ENCODE measurements at regions of chr18 and their contacts with region 1.

Region 1: GRCh38 chr18:12657684-12658425 is at the start of gene SPIRE1:
- DNase-seq: no peak
- H3K4me3 ChIP-seq: peak within 1 kb of the TSS; percentile 87 to 97 (median 90)
- H3K27ac ChIP-seq: peak within 1 kb of the TSS; percentile 97 to 100 (median 100)
- H3K4me1 ChIP-seq: peaks cover 17 to 51% (median 35%) of the 10 kb centered on the region in 4 donors
- H3K27me3 ChIP-seq: no peaks in the 10 kb centered on the region
- CTCF ChIP-seq: peak in 2 of 3 experiments; percentile 3 to 18
- EP300 ChIP-seq: no peak
- POLR2A ChIP-seq: no peak
- total RNA-seq, gene SPIRE1: 33.2 to 48.3 (median 40.2) TPM

Region 2: GRCh38 chr18:12391618-12392165 is 266.2 kb before region 1 on chr18:
- intact Hi-C with region 1: loop called (anchors 1 kb)
- DNase-seq: no peak
- H3K4me3 ChIP-seq: no peak overlapping the region
- H3K27ac ChIP-seq: no peak overlapping the region
- H3K4me1 ChIP-seq: no peaks in the 10 kb centered on the region
- H3K27me3 ChIP-seq: no peaks in the 10 kb centered on the region
- CTCF ChIP-seq: peak; percentile 86 to 93 (median 91)
- EP300 ChIP-seq: no peak
- POLR2A ChIP-seq: no peak

Region 3: DNA sequence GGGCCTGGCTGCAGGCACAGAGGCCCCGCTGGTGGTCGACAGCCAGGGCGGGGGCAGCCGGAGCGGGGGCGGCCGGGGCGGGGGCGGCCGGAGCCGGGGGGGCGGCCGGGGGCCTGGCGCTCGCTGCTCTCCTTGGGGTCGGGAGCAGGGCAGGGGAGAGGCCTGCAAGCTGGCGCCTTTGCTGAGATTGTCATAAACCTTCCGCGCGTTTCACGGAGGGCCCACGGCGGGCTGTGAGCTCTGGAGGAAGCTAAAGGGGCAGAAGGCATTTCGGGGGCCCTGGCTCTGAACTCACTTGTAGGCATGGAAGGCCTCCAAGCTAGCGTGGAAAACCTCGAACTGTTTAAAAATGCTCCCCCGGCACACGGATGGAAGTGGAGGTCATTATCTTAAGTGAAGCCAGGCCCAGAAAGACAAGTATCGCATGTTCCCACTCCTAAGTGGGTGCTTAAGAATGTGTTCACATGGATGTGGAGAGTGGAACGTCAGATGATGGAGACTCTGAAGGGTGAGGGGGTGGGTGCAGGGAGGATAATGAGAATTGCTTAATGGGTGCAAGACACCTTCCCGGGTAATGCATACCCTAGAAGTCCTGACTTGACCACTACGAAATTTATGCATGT is 249.5 kb before region 1 on chr18:
- intact Hi-C with region 1: loop called (anchors 5 kb)
- DNase-seq: no peak
- H3K4me3 ChIP-seq: peak overlapping the region; percentile 66 to 82 (median 75)
- H3K27ac ChIP-seq: peak overlapping the region; percentile 88 to 93 (median 92)
- H3K4me1 ChIP-seq: peaks cover 8 to 37% (median 22%) of the 10 kb centered on the region in 4 donors
- H3K27me3 ChIP-seq: no peaks in the 10 kb centered on the region
- CTCF ChIP-seq: no peak
- EP300 ChIP-seq: no peak
- POLR2A ChIP-seq: no peak

Region 4: GRCh38 chr18:12934454-12935071 is 276.7 kb after region 1 on chr18:
- intact Hi-C with region 1: no loop called
- DNase-seq: no peak
- H3K4me3 ChIP-seq: no peak overlapping the region
- H3K27ac ChIP-seq: no peak overlapping the region
- H3K4me1 ChIP-seq: peaks cover 0 to 9% (median 8%) of the 10 kb centered on the region in 4 donors
- H3K27me3 ChIP-seq: no peaks in the 10 kb centered on the region
- CTCF ChIP-seq: peak; percentile 83 to 91 (median 85)
- EP300 ChIP-seq: no peak
- POLR2A ChIP-seq: no peak